CD4-positive, alpha-beta memory T cell (primary cell): ENCODE measurements at regions of chr19 and their contacts with region 1.

Region 1: GRCh38 chr19:43595999-43596841 is at the starts of genes IRGQ and ZNF576:
- DNase-seq: peak; percentile 99
- H3K4me3 ChIP-seq: peak within 1 kb of the TSS; percentile 50 to 98
- H3K4me3 Mint-ChIP-seq: peak within 1 kb of the TSS; percentile 93 to 98 (median 95)
- H3K27ac ChIP-seq: peak within 1 kb of the TSS; percentile 93
- H3K27ac Mint-ChIP-seq: peak within 1 kb of the TSS; percentile 100
- H3K4me1 ChIP-seq: peaks cover 26% of the 10 kb centered on the region
- H3K4me1 Mint-ChIP-seq: peaks cover 24 to 49% (median 35%) of the 10 kb centered on the region in 4 donors
- H3K27me3 ChIP-seq: no peaks in the 10 kb centered on the region
- H3K27me3 Mint-ChIP-seq: no peaks in the 10 kb centered on the region
- total RNA-seq, gene IRGQ: 16.5 to 17.9 TPM
- total RNA-seq, gene ZNF576: 18.4 to 18.6 TPM

Region 2: GRCh38 chr19:43438291-43439096 is 157.7 kb before region 1 on chr19:
- CTCF ChIA-PET with region 1: interaction called, 8 read pairs
- POLR2A ChIA-PET with region 1: interaction called, 6 read pairs
- intact Hi-C with region 1: loop called (anchors 2 kb)
- DNase-seq: peak in 2 of 5 donors; percentile 12 to 50
- H3K4me3 ChIP-seq: peak overlapping the region in 1 of 2 donors; percentile 38
- H3K4me3 Mint-ChIP-seq: peak overlapping the region in 6 of 8 donors; percentile 13 to 61 (median 52)
- H3K27ac ChIP-seq: peak overlapping the region; percentile 75
- H3K27ac Mint-ChIP-seq: peak overlapping the region; percentile 95 to 98 (median 96)
- H3K4me1 ChIP-seq: peaks cover 44% of the 10 kb centered on the region
- H3K4me1 Mint-ChIP-seq: peaks cover 35 to 66% (median 47%) of the 10 kb centered on the region in 4 donors
- H3K27me3 ChIP-seq: no peaks in the 10 kb centered on the region
- H3K27me3 Mint-ChIP-seq: no peaks in the 10 kb centered on the region

Region 3: DNA sequence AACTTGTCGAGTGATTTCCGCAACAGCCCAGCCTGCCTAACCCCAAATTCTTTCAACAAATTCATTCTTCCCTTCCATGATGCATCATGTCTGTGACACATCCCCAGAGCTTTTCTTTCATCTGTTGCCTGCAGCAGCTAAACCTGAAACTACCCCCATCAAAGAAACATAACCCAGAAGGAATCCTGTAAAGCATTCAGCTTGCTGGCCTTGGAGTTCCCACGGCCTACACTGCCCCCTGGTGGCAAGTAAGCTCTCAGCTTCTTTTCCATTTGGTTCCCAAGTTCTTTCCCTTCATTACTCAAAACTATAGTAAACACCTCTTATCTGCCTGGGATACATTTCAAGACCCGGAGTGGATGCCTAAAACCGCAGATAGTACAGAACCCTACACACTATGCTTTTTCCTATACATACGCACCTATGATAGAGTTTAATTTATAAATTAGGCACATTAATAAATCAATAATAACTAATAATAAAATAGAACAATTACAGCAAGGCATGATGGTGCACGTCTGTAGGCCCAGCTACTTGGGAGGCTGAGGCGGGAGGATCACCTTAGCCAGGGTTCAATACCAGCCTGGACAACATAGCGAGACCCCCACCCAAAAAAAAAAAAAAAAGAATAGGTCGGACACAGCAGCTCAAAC is 76.7 kb before region 1 on chr19:
- CTCF ChIA-PET with region 1: interaction called, 39 read pairs
- POLR2A ChIA-PET with region 1: interaction called, 19 read pairs
- intact Hi-C with region 1: no loop called
- DNase-seq: peak; percentile 75 to 79 (median 78)
- H3K4me3 ChIP-seq: no peak overlapping the region
- H3K4me3 Mint-ChIP-seq: peak overlapping the region in 3 of 8 donors; percentile 2 to 13 (median 9)
- H3K27ac ChIP-seq: no peak overlapping the region
- H3K27ac Mint-ChIP-seq: peak overlapping the region in 6 of 7 donors; percentile 14 to 82 (median 41)
- H3K4me1 ChIP-seq: peaks cover 11% of the 10 kb centered on the region
- H3K4me1 Mint-ChIP-seq: peaks cover 13 to 14% (median 13%) of the 10 kb centered on the region in 4 donors
- H3K27me3 ChIP-seq: no peaks in the 10 kb centered on the region
- H3K27me3 Mint-ChIP-seq: no peaks in the 10 kb centered on the region

Region 4: DNA sequence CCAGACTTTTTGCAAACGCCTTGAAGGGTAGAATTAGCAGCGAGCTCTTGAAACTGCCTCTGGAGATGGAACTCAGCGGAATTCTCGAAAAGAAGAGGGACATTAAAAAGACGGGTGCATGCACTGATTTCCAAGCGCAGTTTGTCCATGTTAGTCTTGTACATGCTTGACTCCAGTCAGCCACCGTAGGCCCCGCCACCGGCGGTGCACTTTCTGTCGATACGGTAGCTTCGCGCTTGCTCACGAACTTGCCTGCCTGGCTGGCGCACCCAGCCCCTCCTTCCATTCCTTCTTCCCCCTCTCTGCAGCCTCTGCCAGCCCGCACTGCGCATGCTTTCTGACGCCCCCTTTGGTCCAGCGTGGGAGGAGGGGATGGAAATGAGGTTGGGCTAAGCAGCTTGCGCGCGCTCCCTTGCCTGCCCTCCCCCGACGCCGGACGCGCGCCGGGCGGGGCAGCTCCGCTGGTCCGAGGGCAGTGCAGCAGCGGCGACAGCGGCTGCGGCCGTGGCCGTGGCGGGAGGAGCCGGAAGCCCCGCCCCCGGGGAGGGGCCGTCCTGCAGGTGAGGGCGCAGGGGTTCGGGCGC is 63.2 kb before region 1 on chr19 and contains the start of gene ZNF575:
- CTCF ChIA-PET with region 1: interaction called, 30 read pairs
- POLR2A ChIA-PET with region 1: interaction called, 31 read pairs
- intact Hi-C with region 1: loop called (anchors 1 kb)
- DNase-seq: peak; percentile 82 to 88 (median 84)
- H3K4me3 ChIP-seq: peak within 1 kb of the TSS; percentile 69 to 88
- H3K4me3 Mint-ChIP-seq: peak within 1 kb of the TSS; percentile 91 to 99 (median 98)
- H3K27ac ChIP-seq: peak within 1 kb of the TSS; percentile 53
- H3K27ac Mint-ChIP-seq: peak within 1 kb of the TSS; percentile 95 to 99 (median 98)
- H3K4me1 ChIP-seq: peaks cover 17% of the 10 kb centered on the region
- H3K4me1 Mint-ChIP-seq: peaks cover 10 to 22% (median 15%) of the 10 kb centered on the region in 4 donors
- H3K27me3 ChIP-seq: no peaks in the 10 kb centered on the region
- H3K27me3 Mint-ChIP-seq: no peaks in the 10 kb centered on the region
- total RNA-seq, gene ZNF575: 11.0 to 11.8 TPM

Region 5: GRCh38 chr19:43562698-43563241 is 33.5 kb before region 1 on chr19:
- CTCF ChIA-PET with region 1: interaction called, 245 read pairs
- POLR2A ChIA-PET with region 1: interaction called, 41 read pairs
- intact Hi-C with region 1: loop called (anchors 1 kb)
- DNase-seq: peak; percentile 82 to 93 (median 86)
- H3K4me3 ChIP-seq: peak overlapping the region in 1 of 2 donors; percentile 32
- H3K4me3 Mint-ChIP-seq: peak overlapping the region; percentile 63 to 86 (median 74)
- H3K27ac ChIP-seq: peak overlapping the region; percentile 72
- H3K27ac Mint-ChIP-seq: peak overlapping the region; percentile 92 to 98 (median 96)
- H3K4me1 ChIP-seq: peaks cover 45% of the 10 kb centered on the region
- H3K4me1 Mint-ChIP-seq: peaks cover 36 to 65% (median 43%) of the 10 kb centered on the region in 4 donors
- H3K27me3 ChIP-seq: no peaks in the 10 kb centered on the region
- H3K27me3 Mint-ChIP-seq: no peaks in the 10 kb centered on the region

Region 6: DNA sequence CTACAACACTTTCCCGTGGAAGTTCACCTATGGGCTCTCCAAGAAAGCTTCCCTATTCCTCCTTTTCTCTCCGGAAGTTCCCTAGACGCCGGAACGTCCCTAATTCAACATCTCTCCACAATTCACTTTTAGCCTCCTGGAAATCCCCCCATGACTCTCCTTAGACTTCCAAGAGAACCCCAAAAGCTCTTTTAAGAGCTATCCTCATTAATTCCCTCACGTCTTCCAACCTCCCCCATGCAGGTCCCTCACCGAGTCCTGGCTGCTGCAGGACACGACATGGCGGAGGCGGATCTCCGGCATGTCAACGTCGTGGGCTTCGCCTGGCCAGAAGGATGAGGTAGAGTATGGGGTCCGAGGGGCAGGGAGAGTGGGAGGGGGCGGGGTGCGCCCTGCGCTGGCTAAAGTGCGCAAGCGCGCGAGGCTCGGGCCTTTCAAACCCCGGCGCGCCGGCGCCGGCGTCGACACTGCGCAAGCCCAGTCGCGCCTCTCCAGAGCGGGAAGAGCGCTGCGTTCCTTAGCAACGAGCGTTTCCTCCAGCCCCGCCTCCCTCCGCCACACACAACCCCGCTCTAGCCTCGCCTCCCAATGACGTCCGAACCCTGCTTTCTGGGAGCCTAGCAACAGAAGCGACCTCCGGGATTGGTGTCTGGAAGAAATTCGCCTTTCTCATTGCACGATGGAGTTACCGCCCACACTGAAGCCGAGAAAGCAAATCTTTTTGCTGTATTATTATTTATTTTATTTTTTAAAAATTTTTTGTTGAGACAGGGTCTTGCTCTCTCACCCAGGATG is 20.9 kb before region 1 on chr19 and contains the starts of genes PINLYP and XRCC1:
- CTCF ChIA-PET with region 1: interaction called, 48 read pairs
- POLR2A ChIA-PET with region 1: interaction called, 49 read pairs
- intact Hi-C with region 1: loop called (anchors 1 kb)
- DNase-seq: peak; percentile 95 to 99 (median 98)
- H3K4me3 ChIP-seq: peak within 1 kb of the TSS; percentile 79 to 100
- H3K4me3 Mint-ChIP-seq: peak within 1 kb of the TSS; percentile 93 to 99 (median 96)
- H3K27ac ChIP-seq: peak within 1 kb of the TSS; percentile 99
- H3K27ac Mint-ChIP-seq: peak within 1 kb of the TSS; percentile 98 to 99 (median 99)
- H3K4me1 ChIP-seq: peaks cover 23% of the 10 kb centered on the region
- H3K4me1 Mint-ChIP-seq: peaks cover 15 to 74% (median 38%) of the 10 kb centered on the region in 4 donors
- H3K27me3 ChIP-seq: no peaks in the 10 kb centered on the region
- H3K27me3 Mint-ChIP-seq: peaks cover 0 to 2% of the 10 kb centered on the region in 2 donors
- total RNA-seq, gene PINLYP: 0.33 to 0.84 TPM
- total RNA-seq, gene XRCC1: 33.4 to 41.0 TPM

Region 7: GRCh38 chr19:43624933-43625332 is 28.7 kb after region 1 on chr19:
- CTCF ChIA-PET with region 1: interaction called, 4 read pairs
- POLR2A ChIA-PET with region 1: interaction called, 15 read pairs
- intact Hi-C with region 1: loop called (anchors 1 kb)
- DNase-seq: peak; percentile 78 to 89 (median 83)
- H3K4me3 ChIP-seq: no peak overlapping the region
- H3K4me3 Mint-ChIP-seq: peak overlapping the region in 3 of 8 donors; percentile 4 to 49 (median 11)
- H3K27ac ChIP-seq: no peak overlapping the region
- H3K27ac Mint-ChIP-seq: peak overlapping the region in 6 of 7 donors; percentile 18 to 88 (median 34)
- H3K4me1 ChIP-seq: peaks cover 19% of the 10 kb centered on the region
- H3K4me1 Mint-ChIP-seq: peaks cover 11 to 35% (median 20%) of the 10 kb centered on the region in 4 donors
- H3K27me3 ChIP-seq: no peaks in the 10 kb centered on the region
- H3K27me3 Mint-ChIP-seq: peaks cover 2 to 9% of the 10 kb centered on the region in 2 donors